PC-9 (cell line): ENCODE measurements at regions of chr20 and their contacts with region 1.

Region 1: DNA sequence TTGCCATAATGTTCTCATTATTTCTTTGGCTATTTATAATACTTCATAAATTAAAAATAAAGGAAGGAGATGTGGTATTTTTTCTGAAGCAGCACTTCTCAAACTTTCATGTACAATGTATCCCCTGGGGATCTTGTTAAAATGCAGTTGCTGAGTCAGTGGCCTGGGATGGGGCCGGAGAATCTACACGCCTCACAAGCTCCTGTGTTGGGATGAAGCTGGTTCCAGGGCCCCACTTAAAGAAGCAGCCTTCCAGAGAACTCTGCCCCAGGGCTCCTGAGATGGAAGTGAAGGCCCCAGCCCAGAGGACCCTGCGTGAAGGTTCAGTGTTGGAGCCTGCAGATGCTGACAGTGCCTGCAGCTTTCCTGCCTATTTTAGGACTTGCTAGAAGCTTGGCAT is 40.1 kb upstream of the SLC23A2 start:
- DNase-seq: no peak
- H3K4me3 ChIP-seq: no peak overlapping the region
- H3K27ac ChIP-seq: no peak overlapping the region
- H3K4me1 ChIP-seq: no peaks in the 10 kb centered on the region
- H3K27me3 ChIP-seq: no peaks in the 10 kb centered on the region
- CTCF ChIP-seq: no peak

Region 2: GRCh38 chr20:4973330-4974097 is 67.9 kb before region 1 on chr20:
- CTCF ChIA-PET with region 1: interaction called, 19 read pairs
- POLR2A ChIA-PET with region 1: no interaction called
- intact Hi-C with region 1: no loop called
- DNase-seq: no peak
- H3K4me3 ChIP-seq: no peak overlapping the region
- H3K27ac ChIP-seq: peak overlapping the region; percentile 6; the same call in 1 of the 2 replicates
- H3K4me1 ChIP-seq: no peaks in the 10 kb centered on the region
- H3K27me3 ChIP-seq: no peaks in the 10 kb centered on the region
- CTCF ChIP-seq: no peak

Region 3: GRCh38 chr20:5195655-5196054 is 154.2 kb after region 1 on chr20:
- CTCF ChIA-PET with region 1: no interaction called
- POLR2A ChIA-PET with region 1: no interaction called
- intact Hi-C with region 1: no loop called
- DNase-seq: no peak
- H3K4me3 ChIP-seq: no peak overlapping the region
- H3K27ac ChIP-seq: no peak overlapping the region
- H3K4me1 ChIP-seq: no peaks in the 10 kb centered on the region
- H3K27me3 ChIP-seq: no peaks in the 10 kb centered on the region
- CTCF ChIP-seq: no peak